B cell (primary cell): ENCODE measurements at regions of chr12 and their contacts with region 1.

Region 1: GRCh38 chr12:132429946-132430643 is 59.9 kb upstream of the FBRSL1 start:
- DNase-seq: peak; percentile 90
- ATAC-seq: peak; percentile 88
- H3K4me3 ChIP-seq: peak overlapping the region in 3 of 5 experiments; percentile 14 to 41 (median 18)
- H3K4me3 Mint-ChIP-seq: peak overlapping the region; percentile 78
- H3K27ac ChIP-seq: peak overlapping the region; percentile 35 to 37
- H3K27ac Mint-ChIP-seq: peak overlapping the region; percentile 82
- H3K4me1 ChIP-seq: peaks cover 60 to 70% of the 10 kb centered on the region in 2 donors
- H3K4me1 Mint-ChIP-seq: peaks cover 63% of the 10 kb centered on the region
- H3K27me3 ChIP-seq: no peaks in the 10 kb centered on the region
- H3K27me3 Mint-ChIP-seq: no peaks in the 10 kb centered on the region
- CTCF ChIP-seq: no peak

Region 2: DNA sequence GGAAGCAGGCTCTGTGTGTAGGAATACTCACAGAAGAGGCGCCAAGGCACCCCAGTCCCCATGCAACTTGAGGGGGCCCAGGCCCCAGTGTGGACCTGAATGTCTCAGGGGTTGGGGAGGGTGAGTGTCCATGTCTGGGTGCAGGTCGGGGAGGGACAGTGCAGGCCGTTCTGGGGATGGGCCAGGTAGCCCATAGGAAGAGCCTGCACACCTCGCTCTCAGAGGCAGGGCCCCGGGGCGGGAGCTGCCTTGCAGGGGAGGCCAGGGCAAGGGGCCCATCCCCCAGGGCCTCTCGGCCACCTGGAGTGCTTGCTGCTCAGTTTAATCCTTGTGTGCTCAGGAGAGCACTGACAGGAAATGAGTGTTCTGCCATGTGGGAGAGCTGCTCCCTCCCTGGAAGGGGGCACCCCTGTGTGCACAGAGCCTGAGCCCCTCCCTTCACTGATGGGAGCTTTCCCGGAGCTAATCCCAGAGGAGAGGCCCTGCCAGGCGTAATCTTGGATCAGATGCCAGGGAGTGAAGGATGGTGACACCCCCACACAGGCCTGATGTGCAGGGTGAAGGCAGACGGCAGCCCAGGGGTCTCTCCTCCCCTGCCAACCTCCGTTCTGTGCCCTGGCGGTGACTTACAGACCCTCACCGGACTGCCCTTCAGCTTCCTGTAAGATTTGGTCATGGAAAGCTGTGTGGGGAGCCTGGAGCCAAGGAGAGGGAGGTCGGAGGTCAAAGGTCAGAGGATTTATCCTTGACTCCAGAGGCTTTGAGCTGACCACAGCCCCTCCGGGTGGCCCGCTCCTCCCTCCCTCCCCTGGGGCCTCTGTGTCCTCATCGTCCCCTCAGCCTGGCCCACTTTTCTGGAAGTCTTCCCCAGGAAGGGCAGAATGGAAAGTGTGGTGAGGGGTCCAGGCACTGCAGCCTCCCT is 35.4 kb after region 1 on chr12:
- CTCF ChIA-PET with region 1: interaction called, 5 read pairs
- POLR2A ChIA-PET with region 1: interaction called, 3 read pairs
- intact Hi-C with region 1: loop called (anchors 5 kb)
- DNase-seq: no peak
- ATAC-seq: no peak
- H3K4me3 ChIP-seq: no peak overlapping the region
- H3K4me3 Mint-ChIP-seq: no peak overlapping the region
- H3K27ac ChIP-seq: peak overlapping the region in 1 of 2 donors; percentile 52
- H3K27ac Mint-ChIP-seq: peak overlapping the region; percentile 37
- H3K4me1 ChIP-seq: peaks cover 67 to 89% of the 10 kb centered on the region in 2 donors
- H3K4me1 Mint-ChIP-seq: peaks cover 48% of the 10 kb centered on the region
- H3K27me3 ChIP-seq: no peaks in the 10 kb centered on the region
- H3K27me3 Mint-ChIP-seq: no peaks in the 10 kb centered on the region
- CTCF ChIP-seq: no peak